WTC11 (cell line): ENCODE measurements at regions of chr4 and their contacts with region 1.

Region 1: GRCh38 chr4:47315346-47315745 is 148.2 kb downstream of the COMMD8 start:
- DNase-seq: no peak
- ATAC-seq: no peak
- H3K4me3 Mint-ChIP-seq: no peak overlapping the region
- H3K27ac Mint-ChIP-seq: no peak overlapping the region
- H3K4me1 Mint-ChIP-seq: peaks cover 9% of the 10 kb centered on the region
- H3K27me3 Mint-ChIP-seq: no peaks in the 10 kb centered on the region
- CTCF ChIP-seq: no peak

Region 2: DNA sequence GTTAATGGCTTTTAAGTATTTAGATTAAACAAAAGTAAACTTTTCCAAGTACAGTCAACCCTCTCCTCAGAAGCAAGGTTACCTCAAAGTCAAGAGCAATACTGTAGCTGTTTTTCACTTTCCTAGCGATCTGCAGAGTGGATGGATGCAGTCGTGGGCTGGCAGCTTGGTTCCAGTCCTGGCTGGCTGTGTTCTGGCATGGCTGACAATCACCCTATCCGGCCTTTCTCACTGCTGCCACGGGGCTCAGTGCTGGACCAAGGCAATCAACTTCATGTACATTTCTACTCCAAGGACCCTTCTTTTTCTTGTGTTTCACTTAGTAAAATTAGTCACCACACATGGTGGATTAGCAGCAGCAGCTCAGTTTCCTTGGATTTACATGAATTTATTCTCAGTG is 75.7 kb before region 1 on chr4:
- CTCF ChIA-PET with region 1: no interaction called
- POLR2A ChIA-PET with region 1: no interaction called
- DNase-seq: no peak
- ATAC-seq: peak; percentile 65
- H3K4me3 Mint-ChIP-seq: no peak overlapping the region
- H3K27ac Mint-ChIP-seq: no peak overlapping the region
- H3K4me1 Mint-ChIP-seq: no peaks in the 10 kb centered on the region
- H3K27me3 Mint-ChIP-seq: no peaks in the 10 kb centered on the region; the same call in 1 of the 2 replicates
- CTCF ChIP-seq: no peak

Region 3: DNA sequence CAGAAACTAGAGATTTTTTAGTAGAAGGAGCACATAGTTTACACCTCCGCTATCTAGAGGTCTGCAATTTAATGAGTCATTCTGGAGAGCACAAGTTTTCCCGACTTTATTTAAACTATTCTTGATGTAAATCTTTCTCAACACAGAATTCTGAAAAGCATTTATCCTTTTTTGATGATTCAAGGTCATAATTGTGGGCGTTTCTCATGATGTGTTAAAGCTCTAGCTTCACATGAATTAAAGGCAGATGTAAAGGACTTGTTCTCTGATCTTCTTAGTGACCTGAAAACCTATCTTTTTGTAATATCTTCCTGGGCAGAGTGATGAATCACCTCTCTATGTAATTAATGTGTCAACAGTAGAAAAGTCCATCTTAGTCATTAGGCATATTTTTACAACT is 19.3 kb after region 1 on chr4:
- CTCF ChIA-PET with region 1: no interaction called
- POLR2A ChIA-PET with region 1: no interaction called
- DNase-seq: no peak
- ATAC-seq: no peak
- H3K4me3 Mint-ChIP-seq: no peak overlapping the region
- H3K27ac Mint-ChIP-seq: no peak overlapping the region
- H3K4me1 Mint-ChIP-seq: no peaks in the 10 kb centered on the region
- H3K27me3 Mint-ChIP-seq: no peaks in the 10 kb centered on the region
- CTCF ChIP-seq: no peak

Region 4: GRCh38 chr4:47933840-47934239 is 618.5 kb after region 1 on chr4:
- CTCF ChIA-PET with region 1: no interaction called
- POLR2A ChIA-PET with region 1: interaction called, 10 read pairs
- DNase-seq: no peak
- ATAC-seq: no peak
- H3K4me3 Mint-ChIP-seq: no peak overlapping the region
- H3K27ac Mint-ChIP-seq: no peak overlapping the region
- H3K4me1 Mint-ChIP-seq: no peaks in the 10 kb centered on the region
- H3K27me3 Mint-ChIP-seq: no peaks in the 10 kb centered on the region; the same call in 1 of the 2 replicates
- CTCF ChIP-seq: peak; percentile 44; the same call in 1 of the 2 replicates